ENCODE measurements at regions of chr14 and their contacts with region 1.

Region 1: DNA sequence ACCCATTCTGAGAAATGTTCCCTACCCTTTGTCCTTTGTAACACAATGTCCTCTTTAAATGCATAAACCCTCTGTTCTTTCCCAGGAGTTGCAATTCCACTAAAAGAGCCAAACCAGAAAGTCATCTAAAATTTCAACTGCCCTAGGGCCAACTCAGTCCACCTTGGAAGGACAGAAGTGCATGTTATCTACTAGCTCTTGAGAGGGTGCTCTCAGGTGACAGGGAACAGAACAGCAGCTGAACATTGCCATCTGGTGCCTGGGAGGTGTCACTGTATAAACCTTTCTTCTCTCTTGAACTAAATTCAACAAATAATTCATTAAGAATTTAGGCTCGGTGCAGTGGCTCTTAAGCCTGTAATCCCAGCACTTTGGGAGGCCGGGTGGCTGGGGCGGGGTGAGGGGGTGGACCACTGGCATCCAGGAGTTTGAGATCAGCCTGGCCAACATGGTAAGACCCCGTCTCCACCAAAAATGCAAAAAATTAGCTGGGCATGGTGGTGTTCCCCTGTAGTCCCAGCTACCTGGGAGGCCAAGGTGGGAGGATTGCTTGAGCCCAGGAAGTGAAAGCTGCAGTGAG is 10.3 kb upstream of the FERMT2 start:
- DNase-seq: peak; percentile 68
- ATAC-seq: peak; percentile 76
- H3K4me3 ChIP-seq: no peak overlapping the region
- H3K27ac ChIP-seq: no peak overlapping the region
- H3K4me1 ChIP-seq: no peaks in the 10 kb centered on the region
- H3K27me3 ChIP-seq: no peaks in the 10 kb centered on the region; the same call in 1 of the 2 replicates
- CTCF ChIP-seq: peak; percentile 72
- POLR2A ChIP-seq: 0 out of 2 replicates have a peak, but pooled peaks have one; percentile 31
- RAD21 ChIP-seq: peak; percentile 80

Region 2: DNA sequence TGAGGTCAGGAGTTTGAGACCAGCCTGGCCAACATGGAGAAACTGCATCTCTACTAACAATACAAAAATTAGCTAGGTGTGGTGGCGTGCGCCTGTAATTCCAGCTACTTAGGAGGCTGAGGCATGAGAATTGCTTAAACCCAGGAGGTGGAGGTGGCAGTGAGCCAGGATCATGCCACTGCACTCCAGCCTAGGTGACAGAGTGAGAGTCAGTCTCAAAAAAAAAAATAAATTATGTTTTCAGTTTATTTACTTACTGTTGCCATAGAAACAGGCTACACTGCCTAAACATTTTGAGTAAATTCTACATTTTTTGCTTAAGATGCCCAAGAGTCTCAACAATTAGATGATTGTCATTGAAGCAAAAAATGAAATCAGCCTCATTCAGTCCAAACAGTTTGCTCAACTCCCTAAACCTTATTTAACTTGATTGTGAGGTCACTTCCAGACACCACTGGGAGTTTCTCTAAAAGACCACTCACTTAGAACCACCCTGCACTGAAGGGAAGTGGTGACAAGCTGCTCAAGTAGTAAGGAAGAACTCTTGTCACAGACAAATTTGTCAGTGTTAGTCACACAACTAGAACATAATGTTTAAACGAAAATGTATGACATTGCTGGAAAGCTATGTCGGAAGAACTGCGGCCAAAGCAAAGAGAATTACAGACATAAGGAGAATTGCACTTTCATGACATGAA is 160.0 kb before region 1 on chr14:
- CTCF ChIA-PET with region 1: interaction called, 12 read pairs
- POLR2A ChIA-PET with region 1: no interaction called
- dilution Hi-C with region 1: no loop called
- in situ Hi-C with region 1: no loop called
- intact Hi-C with region 1: no loop called
- DNase-seq: peak; percentile 92
- ATAC-seq: peak; percentile 82
- H3K4me3 ChIP-seq: peak overlapping the region; percentile 36; the same call in 1 of the 2 replicates
- H3K27ac ChIP-seq: peak overlapping the region; percentile 34
- H3K4me1 ChIP-seq: peaks cover 7% of the 10 kb centered on the region; the same call in 1 of the 2 replicates
- H3K27me3 ChIP-seq: no peaks in the 10 kb centered on the region
- CTCF ChIP-seq: no peak
- POLR2A ChIP-seq: peak; percentile 58
- RAD21 ChIP-seq: no peak

Region 3: GRCh38 chr14:52824507-52824906 is 136.6 kb before region 1 on chr14:
- CTCF ChIA-PET with region 1: interaction called, 6 read pairs
- POLR2A ChIA-PET with region 1: no interaction called
- dilution Hi-C with region 1: no loop called
- in situ Hi-C with region 1: loop called (anchors 10 kb)
- intact Hi-C with region 1: loop called (anchors 1 kb)
- DNase-seq: peak; percentile 18
- ATAC-seq: no peak; the same call in 1 of the 2 replicates
- H3K4me3 ChIP-seq: no peak overlapping the region
- H3K27ac ChIP-seq: no peak overlapping the region
- H3K4me1 ChIP-seq: peaks cover 3% of the 10 kb centered on the region
- H3K27me3 ChIP-seq: no peaks in the 10 kb centered on the region
- CTCF ChIP-seq: no peak
- POLR2A ChIP-seq: no peak
- RAD21 ChIP-seq: no peak

Region 4: DNA sequence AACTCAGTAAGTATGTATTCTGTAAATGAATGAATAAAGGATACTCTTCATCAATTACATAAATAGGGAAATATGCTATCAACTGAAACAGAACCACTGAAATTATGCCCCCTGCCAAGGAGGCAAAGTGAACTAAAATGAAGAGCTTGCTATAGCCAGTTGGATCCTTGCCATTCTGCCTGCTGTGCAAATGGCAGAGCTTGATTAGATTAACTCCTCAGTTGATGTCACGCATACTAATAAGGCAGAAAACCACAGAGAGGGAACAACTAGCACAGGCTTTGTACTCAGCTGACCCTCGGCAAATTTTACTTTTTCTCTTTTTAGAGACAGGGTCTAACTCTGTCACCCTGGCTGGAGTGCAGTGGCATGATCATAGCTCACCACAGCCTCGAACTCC is 26.4 kb after region 1 on chr14:
- CTCF ChIA-PET with region 1: no interaction called
- POLR2A ChIA-PET with region 1: no interaction called
- dilution Hi-C with region 1: no loop called
- in situ Hi-C with region 1: no loop called
- intact Hi-C with region 1: no loop called
- DNase-seq: no peak
- ATAC-seq: no peak
- H3K4me3 ChIP-seq: no peak overlapping the region
- H3K27ac ChIP-seq: no peak overlapping the region
- H3K4me1 ChIP-seq: no peaks in the 10 kb centered on the region
- H3K27me3 ChIP-seq: no peaks in the 10 kb centered on the region
- CTCF ChIP-seq: no peak
- POLR2A ChIP-seq: no peak
- RAD21 ChIP-seq: no peak

Measured in IMR-90 (cell line).